ENCODE measurements at regions of chr2 and their contacts with region 1.

Region 1: GRCh38 chr2:217035967-217036366 is 176.1 kb upstream of the TNP1 start:
- DNase-seq: peak; percentile 80

Region 2: GRCh38 chr2:217054791-217055190 is 18.8 kb after region 1 on chr2:
- intact Hi-C with region 1: loop called (anchors 1 kb)
- DNase-seq: no peak

Region 3: DNA sequence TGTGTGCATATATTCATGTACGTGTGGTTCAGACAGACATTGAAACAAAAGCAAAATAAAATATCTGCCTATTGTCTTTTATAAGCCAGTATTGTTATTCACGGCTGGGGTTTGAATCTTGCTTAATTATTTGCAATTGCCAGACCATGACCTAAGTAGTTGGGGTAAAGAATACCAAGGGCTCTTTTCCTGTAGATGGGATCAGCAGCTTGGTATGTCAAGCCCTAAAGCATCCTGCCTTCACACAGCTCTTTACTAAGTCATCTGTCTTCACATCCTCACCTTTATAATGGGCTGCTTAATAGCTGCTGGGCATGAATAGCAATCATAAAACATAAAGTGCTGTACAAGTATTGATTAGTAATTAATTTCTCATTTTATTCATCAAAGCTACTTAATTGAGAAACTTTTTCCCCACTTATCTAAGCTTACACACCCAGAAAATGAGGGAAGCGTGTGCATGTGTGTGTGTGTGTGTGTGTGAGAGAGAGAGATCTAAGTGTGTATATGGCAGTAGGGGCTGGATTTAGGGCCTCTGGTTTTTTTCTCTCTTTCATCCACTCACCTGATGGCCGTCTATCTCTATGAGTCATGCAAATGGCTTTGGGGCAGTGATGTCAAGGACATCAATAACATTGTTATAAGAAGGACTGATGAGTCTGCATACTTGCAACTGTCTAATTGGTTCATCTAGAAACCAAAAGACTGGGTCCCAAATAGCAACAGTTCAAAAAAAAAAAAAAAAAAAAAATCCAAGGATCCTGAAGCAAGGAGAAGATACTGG is 68.0 kb after region 1 on chr2:
- intact Hi-C with region 1: no loop called
- DNase-seq: no peak

Region 4: DNA sequence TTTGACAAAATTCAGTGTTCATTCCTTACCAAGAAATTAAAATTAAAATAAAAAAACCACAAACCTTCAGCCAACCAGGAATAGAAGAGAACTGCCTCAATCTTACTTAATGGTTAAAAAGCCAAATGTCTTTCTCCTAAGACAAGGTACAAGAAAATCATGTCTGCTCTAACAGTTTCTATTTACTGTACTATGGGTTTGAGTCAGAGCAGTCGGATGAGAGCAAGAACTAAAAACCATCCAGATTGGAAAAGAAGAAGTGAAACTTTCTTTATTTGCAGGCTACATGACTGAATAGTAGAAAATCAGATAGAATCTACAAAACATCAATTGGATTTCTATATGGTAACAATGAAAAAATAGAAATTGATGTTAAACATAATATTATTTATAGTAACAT is 379.3 kb after region 1 on chr2:
- intact Hi-C with region 1: no loop called
- DNase-seq: no peak